A549 (cell line): ENCODE measurements at regions of chr1 and their contacts with region 1.

Region 1: GRCh38 chr1:7752512-7753417 is 18.3 kb upstream of the VAMP3 start:
- DNase-seq: peak; percentile 25 to 53
- ATAC-seq: peak; percentile 76 to 78; a peak in 5 of 6 replicates
- H3K4me3 ChIP-seq: peak overlapping the region; percentile 35
- H3K27ac ChIP-seq: peak overlapping the region in 1 of 2 experiments; percentile 11; a peak in 1 of 6 replicates
- H3K4me1 ChIP-seq: no peaks in the 10 kb centered on the region
- CTCF ChIP-seq: peak; percentile 83
- EP300 ChIP-seq: no peak
- POLR2A ChIP-seq: no peak
- RAD21 ChIP-seq: peak; percentile 76 to 82

Region 2: GRCh38 chr1:7460807-7461206 is 292.0 kb before region 1 on chr1:
- CTCF ChIA-PET with region 1: no interaction called
- POLR2A ChIA-PET with region 1: no interaction called
- DNase-seq: no peak
- ATAC-seq: no peak
- H3K4me3 ChIP-seq: no peak overlapping the region
- H3K27ac ChIP-seq: peak overlapping the region in 1 of 2 experiments; percentile 42; a peak in 1 of 6 replicates
- H3K4me1 ChIP-seq: no peaks in the 10 kb centered on the region
- CTCF ChIP-seq: no peak
- EP300 ChIP-seq: no peak
- POLR2A ChIP-seq: no peak
- RAD21 ChIP-seq: no peak

Region 3: GRCh38 chr1:7646164-7646563 is 106.6 kb before region 1 on chr1:
- CTCF ChIA-PET with region 1: no interaction called
- POLR2A ChIA-PET with region 1: no interaction called
- DNase-seq: no peak
- ATAC-seq: no peak
- H3K4me3 ChIP-seq: no peak overlapping the region
- H3K27ac ChIP-seq: peak overlapping the region; percentile 55 to 92; a peak in 5 of 6 replicates
- H3K4me1 ChIP-seq: peaks cover 9% of the 10 kb centered on the region; the same call in 2 of the 3 replicates
- CTCF ChIP-seq: no peak
- EP300 ChIP-seq: no peak
- POLR2A ChIP-seq: no peak
- RAD21 ChIP-seq: no peak

Region 4: DNA sequence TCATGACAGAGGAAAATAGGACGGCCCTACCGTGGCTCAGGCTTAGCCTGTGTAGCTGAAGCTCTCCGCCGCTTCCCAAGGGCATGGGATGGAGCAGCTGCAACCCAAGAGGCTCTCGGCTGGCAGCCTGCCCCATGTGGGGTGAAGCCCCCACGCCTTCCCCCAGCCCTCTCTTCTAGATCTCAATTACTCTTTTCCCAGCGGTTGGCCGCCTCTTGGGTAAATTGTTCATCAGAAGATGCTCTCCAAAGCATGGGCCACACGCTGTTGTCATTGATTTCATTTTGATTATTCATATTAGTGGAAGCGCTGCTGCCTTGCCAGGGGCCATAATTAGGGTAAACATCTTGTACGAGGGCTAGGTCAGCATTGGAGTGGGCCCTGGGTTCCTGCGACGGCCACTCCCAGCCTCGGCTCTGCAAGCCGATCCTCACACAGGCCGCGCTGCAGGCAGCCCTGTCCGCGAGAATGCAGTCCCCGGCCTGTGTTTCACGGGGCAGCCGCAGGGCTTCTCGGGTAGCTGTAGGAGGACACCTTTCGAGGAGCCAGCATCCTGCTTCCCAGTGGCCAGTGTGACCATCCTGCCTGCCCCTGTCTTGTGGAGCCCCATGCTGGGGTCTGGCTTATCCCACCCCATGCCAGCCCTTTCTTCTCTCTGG is 96.1 kb before region 1 on chr1:
- CTCF ChIA-PET with region 1: interaction called, 36 read pairs
- POLR2A ChIA-PET with region 1: no interaction called
- DNase-seq: no peak
- ATAC-seq: no peak
- H3K4me3 ChIP-seq: no peak overlapping the region
- H3K27ac ChIP-seq: no peak overlapping the region
- H3K4me1 ChIP-seq: no peaks in the 10 kb centered on the region
- CTCF ChIP-seq: no peak
- EP300 ChIP-seq: no peak
- POLR2A ChIP-seq: no peak
- RAD21 ChIP-seq: no peak

Region 5: GRCh38 chr1:7680207-7680954 is 72.4 kb before region 1 on chr1:
- CTCF ChIA-PET with region 1: interaction called, 71 read pairs
- POLR2A ChIA-PET with region 1: interaction called, 3 read pairs
- DNase-seq: peak; percentile 21 to 31
- ATAC-seq: peak; percentile 57 to 73
- H3K4me3 ChIP-seq: peak overlapping the region; percentile 79
- H3K27ac ChIP-seq: peak overlapping the region; percentile 87 to 95
- H3K4me1 ChIP-seq: no peaks in the 10 kb centered on the region
- CTCF ChIP-seq: no peak
- EP300 ChIP-seq: no peak
- POLR2A ChIP-seq: peak; percentile 45
- RAD21 ChIP-seq: no peak

Region 6: GRCh38 chr1:7704214-7705047 is 48.3 kb before region 1 on chr1:
- CTCF ChIA-PET with region 1: interaction called, 13 read pairs
- POLR2A ChIA-PET with region 1: no interaction called
- DNase-seq: peak; percentile 83 to 85
- ATAC-seq: peak; percentile 96 to 98
- H3K4me3 ChIP-seq: peak overlapping the region; percentile 44
- H3K27ac ChIP-seq: peak overlapping the region; percentile 24 to 82; a peak in 5 of 6 replicates
- H3K4me1 ChIP-seq: peaks cover 6% of the 10 kb centered on the region; the same call in 1 of the 3 replicates
- CTCF ChIP-seq: no peak
- EP300 ChIP-seq: no peak
- POLR2A ChIP-seq: no peak
- RAD21 ChIP-seq: no peak

Region 7: GRCh38 chr1:7721940-7722669 is 30.7 kb before region 1 on chr1:
- CTCF ChIA-PET with region 1: interaction called, 12 read pairs
- POLR2A ChIA-PET with region 1: no interaction called
- DNase-seq: no peak
- ATAC-seq: no peak
- H3K4me3 ChIP-seq: no peak overlapping the region
- H3K27ac ChIP-seq: no peak overlapping the region
- H3K4me1 ChIP-seq: no peaks in the 10 kb centered on the region
- CTCF ChIP-seq: no peak
- EP300 ChIP-seq: no peak
- POLR2A ChIP-seq: no peak
- RAD21 ChIP-seq: no peak

Region 8: GRCh38 chr1:8133657-8134430 is 381.1 kb after region 1 on chr1:
- CTCF ChIA-PET with region 1: no interaction called
- POLR2A ChIA-PET with region 1: no interaction called
- DNase-seq: no peak
- ATAC-seq: no peak
- H3K4me3 ChIP-seq: no peak overlapping the region
- H3K27ac ChIP-seq: peak overlapping the region; percentile 34 to 85; a peak in 5 of 6 replicates
- H3K4me1 ChIP-seq: peaks cover 34% of the 10 kb centered on the region
- CTCF ChIP-seq: no peak
- EP300 ChIP-seq: no peak
- POLR2A ChIP-seq: no peak
- RAD21 ChIP-seq: no peak